Left ventricle myocardium inferior (tissue), 1 donor: ENCODE measurements at regions of chr3 and their contacts with region 1.

Region 1: DNA sequence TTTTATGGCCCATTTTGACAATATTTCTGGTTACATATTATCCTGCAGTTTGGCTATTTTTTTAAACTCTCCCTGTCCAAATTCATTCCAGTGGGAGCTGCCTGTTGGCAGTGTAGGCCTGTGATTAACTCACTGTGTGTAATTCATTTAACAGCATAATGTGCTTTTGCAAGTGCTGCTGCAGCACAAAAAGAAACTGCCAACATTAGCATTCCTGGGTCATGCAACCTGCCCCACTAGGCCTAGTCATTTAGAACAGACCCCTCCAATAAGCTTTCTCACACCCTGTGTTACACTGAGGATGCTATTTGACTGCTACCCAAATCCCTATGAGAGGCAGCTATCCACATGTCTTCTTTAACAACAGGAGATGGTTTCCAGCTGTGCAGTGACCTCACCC is 251.2 kb upstream of the UBE2E2 start:
- DNase-seq: peak; percentile 30
- H3K4me3 ChIP-seq: no peak overlapping the region
- H3K27ac ChIP-seq: no peak overlapping the region
- H3K4me1 ChIP-seq: no peaks in the 10 kb centered on the region
- H3K27me3 ChIP-seq: no peaks in the 10 kb centered on the region
- CTCF ChIP-seq: no peak

Region 2: DNA sequence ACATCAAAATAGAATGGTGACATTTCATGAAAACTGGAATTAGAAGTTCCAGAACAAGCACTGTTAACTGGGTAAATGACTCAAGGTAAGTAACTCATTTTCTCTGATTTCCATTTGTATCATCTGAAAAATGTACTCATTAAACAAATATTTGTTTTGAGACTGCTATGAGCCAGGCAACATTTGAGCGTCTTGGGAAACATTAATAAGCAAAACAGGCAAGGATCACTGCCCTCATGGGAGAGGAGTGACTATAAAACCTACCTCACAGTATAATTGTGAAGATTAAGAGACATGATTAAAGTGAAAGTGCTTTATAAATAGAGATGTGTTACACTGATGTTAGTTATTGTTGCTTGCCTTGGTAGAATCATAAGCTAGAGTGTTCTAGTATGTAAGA is 460.6 kb before region 1 on chr3:
- intact Hi-C with region 1: no loop called
- DNase-seq: no peak
- H3K4me3 ChIP-seq: no peak overlapping the region
- H3K27ac ChIP-seq: no peak overlapping the region
- H3K4me1 ChIP-seq: no peaks in the 10 kb centered on the region
- H3K27me3 ChIP-seq: no peaks in the 10 kb centered on the region
- CTCF ChIP-seq: no peak

Region 3: DNA sequence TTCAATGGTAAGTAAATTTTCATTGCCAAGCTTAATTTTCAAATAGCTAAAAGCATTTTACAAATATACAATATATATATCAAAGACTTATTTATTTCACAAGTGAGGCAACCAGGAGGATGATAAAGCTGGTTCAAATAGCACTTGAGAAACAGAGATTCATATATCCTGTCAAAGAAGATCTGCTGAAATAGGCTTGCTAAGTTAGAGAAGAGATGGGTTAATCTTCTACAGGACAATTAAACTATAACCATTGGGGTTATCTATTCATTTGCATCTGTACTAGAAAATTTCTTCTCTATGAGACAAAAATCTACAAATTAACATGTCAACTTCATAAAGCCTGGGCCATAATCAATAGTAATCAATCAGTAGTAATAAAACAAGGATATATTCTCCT is 386.5 kb before region 1 on chr3:
- intact Hi-C with region 1: loop called (anchors 5 kb)
- DNase-seq: no peak
- H3K4me3 ChIP-seq: no peak overlapping the region
- H3K27ac ChIP-seq: no peak overlapping the region
- H3K4me1 ChIP-seq: no peaks in the 10 kb centered on the region
- H3K27me3 ChIP-seq: no peaks in the 10 kb centered on the region
- CTCF ChIP-seq: no peak